GM12878 (cell line): ENCODE measurements at regions of chr11 and their contacts with region 1.

Region 1: DNA sequence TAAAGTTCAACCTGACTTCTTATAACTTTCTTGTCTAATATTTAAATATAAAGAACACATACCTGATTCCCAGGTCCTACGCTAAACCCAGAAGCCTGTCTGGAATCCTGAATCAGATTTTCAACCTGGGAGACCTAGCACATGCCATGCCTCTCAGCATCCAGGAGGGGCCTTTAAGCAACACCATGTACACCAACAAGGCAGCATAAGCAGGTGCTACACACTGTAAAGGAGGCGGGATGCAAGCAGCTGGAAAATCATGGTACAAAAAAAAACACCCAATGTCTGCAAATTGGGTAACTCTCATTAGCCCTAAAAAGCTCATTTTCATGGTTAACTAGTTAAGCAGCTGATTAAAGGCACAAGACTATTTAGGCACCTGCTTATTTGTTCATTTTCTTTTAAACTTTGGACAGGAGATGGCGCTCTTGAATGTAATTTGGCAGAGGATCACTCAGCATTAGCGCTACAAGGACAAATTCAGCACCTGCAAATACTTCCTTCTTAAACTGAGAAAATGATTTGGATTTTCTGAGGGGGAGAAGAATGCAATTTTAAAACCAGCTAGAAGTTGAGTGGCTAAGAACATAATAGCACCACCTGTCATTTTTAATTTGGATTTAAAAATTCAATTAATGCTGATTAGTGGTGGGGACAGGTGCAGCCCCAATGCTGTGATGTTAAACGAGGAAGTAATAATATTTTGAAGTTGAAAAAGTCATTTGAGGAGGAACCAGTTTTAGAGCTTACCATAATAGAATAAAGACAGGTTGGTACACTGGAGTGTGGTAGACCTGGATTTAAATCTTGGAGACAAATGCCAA is 104.0 kb downstream of the FAR1 start:
- DNase-seq: peak; percentile 11
- ATAC-seq: peak; percentile 88
- H3K4me3 ChIP-seq: no peak overlapping the region
- H3K27ac ChIP-seq: no peak overlapping the region
- H3K4me1 ChIP-seq: no peaks in the 10 kb centered on the region
- H3K27me3 ChIP-seq: no peaks in the 10 kb centered on the region
- CTCF ChIP-seq: peak; percentile 24 to 58 (median 54); a peak in 4 of 6 replicates
- EP300 ChIP-seq: no peak
- POLR2A ChIP-seq: no peak
- RAD21 ChIP-seq: peak; percentile 73

Region 2: GRCh38 chr11:13629779-13630178 is 142.7 kb before region 1 on chr11:
- CTCF ChIA-PET with region 1: no interaction called
- POLR2A ChIA-PET with region 1: no interaction called
- RAD21 ChIA-PET with region 1: no interaction called
- SMC1A ChIA-PET with region 1: no interaction called
- in situ Hi-C with region 1: no loop called
- intact Hi-C with region 1: no loop called
- DNase-seq: no peak
- ATAC-seq: no peak
- H3K4me3 ChIP-seq: no peak overlapping the region
- H3K27ac ChIP-seq: no peak overlapping the region
- H3K4me1 ChIP-seq: no peaks in the 10 kb centered on the region
- H3K27me3 ChIP-seq: no peaks in the 10 kb centered on the region
- CTCF ChIP-seq: no peak
- EP300 ChIP-seq: no peak
- POLR2A ChIP-seq: no peak
- RAD21 ChIP-seq: no peak

Region 3: GRCh38 chr11:13759050-13759449 is 13.4 kb before region 1 on chr11:
- CTCF ChIA-PET with region 1: interaction called, 10 read pairs
- POLR2A ChIA-PET with region 1: no interaction called
- RAD21 ChIA-PET with region 1: no interaction called
- SMC1A ChIA-PET with region 1: no interaction called
- in situ Hi-C with region 1: no loop called
- intact Hi-C with region 1: no loop called
- DNase-seq: no peak
- ATAC-seq: no peak
- H3K4me3 ChIP-seq: no peak overlapping the region
- H3K27ac ChIP-seq: no peak overlapping the region
- H3K4me1 ChIP-seq: no peaks in the 10 kb centered on the region
- H3K27me3 ChIP-seq: no peaks in the 10 kb centered on the region
- CTCF ChIP-seq: no peak
- EP300 ChIP-seq: no peak
- POLR2A ChIP-seq: no peak
- RAD21 ChIP-seq: no peak

Region 4: GRCh38 chr11:13949876-13950275 is 177.4 kb after region 1 on chr11:
- CTCF ChIA-PET with region 1: no interaction called
- POLR2A ChIA-PET with region 1: no interaction called
- RAD21 ChIA-PET with region 1: no interaction called
- SMC1A ChIA-PET with region 1: no interaction called
- in situ Hi-C with region 1: no loop called
- intact Hi-C with region 1: loop called (anchors 2 kb)
- DNase-seq: no peak
- ATAC-seq: no peak
- H3K4me3 ChIP-seq: no peak overlapping the region
- H3K27ac ChIP-seq: no peak overlapping the region
- H3K4me1 ChIP-seq: no peaks in the 10 kb centered on the region
- H3K27me3 ChIP-seq: no peaks in the 10 kb centered on the region
- CTCF ChIP-seq: no peak
- EP300 ChIP-seq: no peak
- POLR2A ChIP-seq: no peak
- RAD21 ChIP-seq: no peak

Region 5: DNA sequence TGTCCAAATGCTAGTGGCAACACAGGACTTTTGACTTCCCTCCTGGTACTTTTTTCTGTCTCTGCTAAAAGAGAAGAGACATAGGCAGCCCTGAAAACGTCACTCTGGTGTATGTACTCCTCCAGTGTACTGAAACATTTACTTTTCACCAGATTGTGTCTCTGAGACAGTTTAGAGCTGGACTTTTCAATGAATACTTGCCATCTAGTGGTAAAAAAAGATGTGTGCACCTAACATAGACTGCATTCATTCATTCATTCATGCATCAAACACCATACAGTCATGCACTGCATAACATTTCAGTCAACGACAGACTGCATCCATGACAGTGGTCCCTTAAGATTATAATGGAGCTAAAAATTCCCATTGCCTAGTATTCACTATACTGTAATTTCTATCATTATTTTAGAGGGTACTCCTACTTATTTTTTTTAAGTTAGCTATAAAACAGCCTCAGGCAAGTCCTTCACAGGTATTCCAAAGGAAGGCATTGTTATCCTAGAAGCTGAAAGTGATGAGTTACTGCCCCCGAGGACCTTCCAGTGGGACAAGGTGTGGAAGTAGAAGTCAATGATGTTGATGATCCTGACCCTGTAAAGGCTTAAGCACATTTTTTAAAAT is 376.3 kb after region 1 on chr11:
- CTCF ChIA-PET with region 1: interaction called, 19 read pairs
- POLR2A ChIA-PET with region 1: no interaction called
- RAD21 ChIA-PET with region 1: no interaction called
- SMC1A ChIA-PET with region 1: interaction called, 3 read pairs
- in situ Hi-C with region 1: no loop called
- intact Hi-C with region 1: loop called (anchors 5 kb)
- DNase-seq: no peak
- ATAC-seq: peak; percentile 81
- H3K4me3 ChIP-seq: no peak overlapping the region
- H3K27ac ChIP-seq: no peak overlapping the region
- H3K4me1 ChIP-seq: no peaks in the 10 kb centered on the region
- H3K27me3 ChIP-seq: no peaks in the 10 kb centered on the region
- CTCF ChIP-seq: peak; percentile 37 to 57 (median 47); a peak in 5 of 6 replicates
- EP300 ChIP-seq: no peak
- POLR2A ChIP-seq: no peak
- RAD21 ChIP-seq: peak; percentile 36; the same call in 1 of the 2 replicates